HCT116 (cell line): ENCODE measurements at regions of chr7 and their contacts with region 1.

Region 1: GRCh38 chr7:116588641-116589594 is 64.1 kb downstream of the CAV1 start:
- DNase-seq: peak; percentile 44
- ATAC-seq: peak; percentile 60
- H3K4me3 ChIP-seq: no peak overlapping the region
- H3K27ac ChIP-seq: peak overlapping the region; percentile 44; the same call in 1 of the 2 replicates
- H3K4me1 ChIP-seq: peaks cover 10 to 37% of the 10 kb centered on the region in 2 experiments; a peak in 3 of 4 replicates
- H3K27me3 ChIP-seq: no peaks in the 10 kb centered on the region
- CTCF ChIP-seq: peak; percentile 42 to 88 (median 70)
- POLR2A ChIP-seq: no peak
- RAD21 ChIP-seq: peak; percentile 93

Region 2: DNA sequence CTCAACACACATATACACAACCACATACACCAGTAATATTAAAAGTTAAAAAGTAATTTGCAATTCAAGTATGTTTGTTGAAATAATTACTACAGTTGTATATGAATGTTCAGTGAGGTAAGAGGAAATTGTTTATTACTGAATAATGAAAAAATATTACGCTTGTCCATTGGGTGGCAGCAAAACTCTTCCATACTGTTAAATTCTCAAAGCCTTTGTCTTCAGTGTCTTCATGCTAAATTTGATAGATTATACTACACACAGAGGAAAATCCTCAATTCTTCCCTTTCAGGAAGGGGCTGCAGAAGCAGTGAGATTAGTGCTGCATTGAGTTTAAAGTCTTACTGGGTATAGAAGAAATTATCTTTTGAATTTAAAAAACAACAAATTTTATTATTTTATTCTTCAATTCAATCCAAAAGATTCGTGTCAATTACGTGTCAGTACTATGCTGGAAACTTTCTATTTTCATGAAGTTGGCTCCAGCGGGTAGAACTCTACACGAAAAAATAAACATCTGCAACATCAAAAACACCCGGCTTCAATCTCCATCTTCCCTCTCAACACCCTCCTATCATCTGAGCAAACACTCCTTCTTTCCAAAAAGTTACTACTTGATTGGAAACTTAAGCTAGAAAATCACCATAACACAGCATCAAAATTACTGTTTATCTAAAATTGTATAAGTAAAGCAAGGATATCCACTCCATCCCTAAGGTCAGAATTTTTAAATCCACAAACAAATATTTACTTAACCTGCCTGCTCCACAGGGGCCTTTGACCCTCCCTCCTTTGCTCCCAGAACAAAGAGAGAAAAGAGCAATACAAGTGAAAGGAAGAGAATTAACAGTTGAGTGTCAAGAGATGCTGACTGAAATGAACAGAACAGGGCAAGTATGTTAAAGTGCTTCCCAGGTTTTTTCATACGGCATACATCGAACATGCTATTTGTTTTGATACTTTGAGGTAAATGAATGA is 415.6 kb before region 1 on chr7:
- CTCF ChIA-PET with region 1: interaction called, 94 read pairs
- POLR2A ChIA-PET with region 1: no interaction called
- RAD21 ChIA-PET with region 1: interaction called in 1 of 2 experiments, 3 read pairs
- intact Hi-C with region 1: no loop called
- DNase-seq: peak; percentile 55
- ATAC-seq: peak; percentile 65
- H3K4me3 ChIP-seq: no peak overlapping the region
- H3K27ac ChIP-seq: no peak overlapping the region
- H3K4me1 ChIP-seq: peaks cover 3 to 5% of the 10 kb centered on the region in 2 experiments; a peak in 1 of 4 replicates
- H3K27me3 ChIP-seq: no peaks in the 10 kb centered on the region
- CTCF ChIP-seq: peak; percentile 28 to 73 (median 64); a peak in 5 of 6 replicates
- POLR2A ChIP-seq: no peak
- RAD21 ChIP-seq: peak; percentile 87

Region 3: DNA sequence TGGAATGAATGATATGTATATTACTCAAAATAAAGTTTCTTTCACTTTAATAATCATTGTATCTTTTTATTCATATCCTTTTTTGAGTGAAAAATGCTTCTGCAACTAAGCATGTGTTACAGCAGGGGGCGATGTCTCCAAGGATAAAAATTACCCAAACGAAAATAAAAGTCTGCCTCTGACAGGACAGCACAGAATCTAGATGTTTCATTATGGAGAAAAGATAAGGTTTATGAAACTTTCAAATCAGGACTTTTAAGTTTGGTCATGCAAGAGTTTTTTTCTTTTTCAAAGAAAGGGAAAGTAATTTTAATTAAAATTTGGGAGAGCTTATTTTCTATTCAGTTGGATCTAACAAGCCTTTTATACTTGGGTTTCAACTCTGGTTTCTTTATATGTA is 330.2 kb before region 1 on chr7:
- CTCF ChIA-PET with region 1: interaction called, 52 read pairs
- POLR2A ChIA-PET with region 1: interaction called, 6 read pairs
- RAD21 ChIA-PET with region 1: interaction called, 8 to 21 read pairs
- intact Hi-C with region 1: loop called (anchors 1 kb)
- DNase-seq: peak; percentile 48
- ATAC-seq: no peak
- H3K4me3 ChIP-seq: no peak overlapping the region
- H3K27ac ChIP-seq: peak overlapping the region; percentile 74; the same call in 1 of the 2 replicates
- H3K4me1 ChIP-seq: peaks cover 43 to 58% of the 10 kb centered on the region in 2 experiments
- H3K27me3 ChIP-seq: no peaks in the 10 kb centered on the region
- CTCF ChIP-seq: peak; percentile 57 to 91 (median 81)
- POLR2A ChIP-seq: no peak
- RAD21 ChIP-seq: peak; percentile 96

Region 4: GRCh38 chr7:116426428-116427156 is 162.3 kb before region 1 on chr7:
- CTCF ChIA-PET with region 1: interaction called, 4 read pairs
- POLR2A ChIA-PET with region 1: no interaction called
- RAD21 ChIA-PET with region 1: no interaction called
- intact Hi-C with region 1: loop called (anchors 10 kb)
- DNase-seq: peak; percentile 93
- ATAC-seq: peak; percentile 62
- H3K4me3 ChIP-seq: peak overlapping the region in 1 of 2 experiments; percentile 1; a peak in 2 of 4 replicates
- H3K27ac ChIP-seq: peak overlapping the region; percentile 98
- H3K4me1 ChIP-seq: peaks cover 72 to 90% of the 10 kb centered on the region in 2 experiments
- H3K27me3 ChIP-seq: no peaks in the 10 kb centered on the region
- CTCF ChIP-seq: no peak
- POLR2A ChIP-seq: no peak
- RAD21 ChIP-seq: no peak; the same call in 1 of the 2 replicates

Region 5: DNA sequence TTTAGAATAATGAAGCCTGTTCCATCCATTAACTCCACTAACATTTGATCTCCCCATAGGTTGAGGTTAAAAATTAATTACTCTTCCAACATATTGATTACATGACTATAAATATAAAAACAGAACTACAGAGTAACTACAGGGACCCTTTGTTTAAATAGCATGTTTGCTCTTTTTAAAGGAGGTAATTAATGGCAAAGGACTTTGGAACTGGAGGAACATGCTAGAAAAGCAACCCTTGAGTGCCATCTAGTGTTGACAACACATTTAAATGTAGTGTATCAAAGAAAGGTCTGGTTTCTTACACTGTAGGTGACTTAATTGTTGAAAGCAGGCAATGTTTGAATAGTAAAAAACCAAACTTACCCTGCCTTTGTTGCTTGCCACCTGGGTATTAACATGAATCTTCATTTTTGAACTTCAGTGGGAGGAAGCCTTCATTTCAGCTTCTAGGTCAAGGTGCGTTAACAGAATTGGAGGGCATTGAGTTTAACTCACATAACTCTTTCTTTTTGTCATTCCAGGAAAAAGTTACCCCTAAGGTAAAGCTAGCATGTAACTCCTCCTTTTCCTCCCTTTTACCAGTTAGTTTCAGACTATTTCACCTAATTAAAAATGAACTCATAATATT is 220.8 kb after region 1 on chr7:
- CTCF ChIA-PET with region 1: interaction called, 31 read pairs
- POLR2A ChIA-PET with region 1: interaction called, 5 read pairs
- RAD21 ChIA-PET with region 1: interaction called, 6 to 12 read pairs
- intact Hi-C with region 1: loop called (anchors 1 kb)
- DNase-seq: peak; percentile 67
- ATAC-seq: peak; percentile 81
- H3K4me3 ChIP-seq: no peak overlapping the region
- H3K27ac ChIP-seq: peak overlapping the region; percentile 64
- H3K4me1 ChIP-seq: peaks cover 43 to 48% of the 10 kb centered on the region in 2 experiments
- H3K27me3 ChIP-seq: no peaks in the 10 kb centered on the region
- CTCF ChIP-seq: peak; percentile 43 to 86 (median 76); a peak in 4 of 6 replicates
- POLR2A ChIP-seq: no peak
- RAD21 ChIP-seq: peak; percentile 94

Region 6: DNA sequence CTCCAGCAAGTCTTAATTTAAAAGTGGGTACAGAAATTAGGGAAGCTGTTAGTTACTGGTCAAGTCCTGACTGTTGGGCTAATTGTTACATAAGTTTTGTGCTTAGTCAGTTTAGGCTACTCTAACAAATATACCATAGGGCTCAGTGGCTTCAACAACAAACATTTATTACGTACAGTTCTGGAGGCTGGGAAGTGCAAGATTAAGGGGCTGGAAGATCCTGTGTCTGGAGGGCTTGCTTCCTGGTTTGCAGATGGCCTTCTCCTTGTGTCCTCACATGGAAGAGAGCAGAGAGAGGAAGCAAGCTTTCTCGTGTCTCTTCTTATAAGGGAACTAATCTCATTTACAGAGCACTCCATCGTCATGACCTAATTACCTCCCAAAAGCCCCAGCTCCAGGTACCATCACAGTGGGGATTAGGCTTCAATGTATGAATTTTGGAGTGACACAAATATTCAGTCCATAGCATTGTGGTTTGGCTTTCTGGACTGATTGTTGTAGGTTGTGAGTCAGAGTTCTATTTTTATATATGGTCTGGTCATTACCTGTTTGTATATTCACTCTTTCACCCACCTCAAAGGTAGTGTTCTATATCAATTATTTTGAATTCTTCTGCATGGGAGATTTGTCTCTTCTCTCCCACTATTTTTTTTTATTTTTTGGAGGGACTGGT is 381.5 kb after region 1 on chr7:
- CTCF ChIA-PET with region 1: no interaction called
- POLR2A ChIA-PET with region 1: no interaction called
- RAD21 ChIA-PET with region 1: no interaction called
- intact Hi-C with region 1: no loop called
- DNase-seq: no peak
- ATAC-seq: peak; percentile 54
- H3K4me3 ChIP-seq: no peak overlapping the region
- H3K27ac ChIP-seq: no peak overlapping the region
- H3K4me1 ChIP-seq: peaks cover 15 to 18% of the 10 kb centered on the region in 2 experiments
- H3K27me3 ChIP-seq: no peaks in the 10 kb centered on the region
- CTCF ChIP-seq: no peak
- POLR2A ChIP-seq: no peak
- RAD21 ChIP-seq: no peak